ENCODE measurements at regions of chr1 and their contacts with region 1.

Region 1: DNA sequence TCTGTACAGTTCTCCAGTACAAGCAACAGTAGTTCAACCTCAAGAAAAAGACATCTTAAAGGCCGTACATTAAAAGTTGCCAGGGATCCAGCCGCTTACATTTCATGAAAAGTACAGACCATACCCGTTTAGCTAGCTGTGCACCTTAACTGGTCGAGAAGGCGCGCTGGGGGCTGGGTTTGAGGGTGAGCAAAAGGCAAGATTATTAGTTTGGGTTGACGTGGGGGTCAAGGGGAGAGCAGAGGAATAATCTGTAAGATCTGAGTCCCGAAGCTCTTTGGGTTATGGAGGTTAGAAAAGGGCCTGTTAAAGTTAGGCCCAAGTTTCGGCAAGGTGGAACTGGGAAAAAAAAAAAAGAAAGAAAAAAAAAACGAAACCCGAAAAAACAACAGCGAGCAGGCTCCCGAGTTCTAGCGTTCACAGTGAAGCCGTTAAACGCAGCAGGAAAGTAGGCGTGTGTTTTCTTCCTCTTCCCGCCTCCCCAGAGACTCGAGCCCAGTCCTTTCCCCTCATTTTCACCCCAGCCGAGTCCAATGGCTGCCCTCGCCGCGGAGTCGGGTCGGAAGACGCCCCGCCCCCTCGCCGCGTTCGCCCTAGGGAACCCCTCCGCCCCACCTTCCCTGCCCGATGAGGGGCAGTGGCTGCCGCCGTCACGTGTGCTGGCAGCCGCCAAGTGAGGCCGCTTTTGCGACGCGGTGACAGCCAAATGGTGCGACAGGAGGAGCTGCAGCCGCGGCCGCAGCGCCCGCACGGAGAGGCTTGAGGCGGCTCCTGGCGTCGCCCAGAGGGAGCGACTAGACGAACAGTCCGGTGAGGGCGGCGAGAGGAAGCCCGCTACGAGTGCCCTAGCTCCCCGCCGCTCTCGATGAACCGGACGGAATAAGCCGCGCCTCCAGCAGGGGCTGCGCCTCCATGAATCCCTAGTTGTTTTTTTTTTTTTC is at the start of gene PKN2:
- DNase-seq: peak; percentile 98
- H3K4me3 Mint-ChIP-seq: peak within 1 kb of the TSS; percentile 92
- H3K27ac Mint-ChIP-seq: peak within 1 kb of the TSS; percentile 95
- H3K4me1 Mint-ChIP-seq: peaks cover 22% of the 10 kb centered on the region
- H3K27me3 Mint-ChIP-seq: no peaks in the 10 kb centered on the region
- total RNA-seq, gene PKN2: 16.2 to 17.9 TPM

Region 2: DNA sequence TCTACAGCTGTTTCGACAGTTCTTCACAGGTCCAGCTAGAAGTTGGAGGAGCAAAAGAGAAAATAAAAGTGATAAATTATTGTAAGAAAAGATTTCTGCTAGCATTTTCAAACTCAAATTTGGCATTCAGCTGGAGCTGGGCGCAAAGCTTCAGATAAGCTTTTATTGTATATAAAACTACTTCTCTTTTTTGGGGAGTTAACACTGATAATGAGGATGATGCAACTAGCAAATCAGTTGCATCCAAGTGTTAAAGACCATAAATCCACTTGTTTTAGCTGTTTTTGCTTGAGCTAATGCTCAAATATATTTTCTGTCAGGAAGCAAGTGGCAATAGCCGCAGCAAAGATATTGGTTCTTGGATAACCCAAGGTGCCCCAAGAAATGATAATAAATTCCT is 126.8 kb before region 1 on chr1:
- CTCF ChIA-PET with region 1: no interaction called
- POLR2A ChIA-PET with region 1: no interaction called
- intact Hi-C with region 1: no loop called
- DNase-seq: no peak
- H3K4me3 Mint-ChIP-seq: no peak overlapping the region
- H3K27ac Mint-ChIP-seq: no peak overlapping the region
- H3K4me1 Mint-ChIP-seq: no peaks in the 10 kb centered on the region
- H3K27me3 Mint-ChIP-seq: peaks cover 2% of the 10 kb centered on the region

Region 3: GRCh38 chr1:88655685-88656299 is 28.0 kb before region 1 on chr1:
- CTCF ChIA-PET with region 1: interaction called, 23 read pairs
- POLR2A ChIA-PET with region 1: interaction called, 4 read pairs
- intact Hi-C with region 1: loop called (anchors 1 kb)
- DNase-seq: no peak
- H3K4me3 Mint-ChIP-seq: no peak overlapping the region
- H3K27ac Mint-ChIP-seq: no peak overlapping the region
- H3K4me1 Mint-ChIP-seq: peaks cover 14% of the 10 kb centered on the region
- H3K27me3 Mint-ChIP-seq: no peaks in the 10 kb centered on the region

Region 4: DNA sequence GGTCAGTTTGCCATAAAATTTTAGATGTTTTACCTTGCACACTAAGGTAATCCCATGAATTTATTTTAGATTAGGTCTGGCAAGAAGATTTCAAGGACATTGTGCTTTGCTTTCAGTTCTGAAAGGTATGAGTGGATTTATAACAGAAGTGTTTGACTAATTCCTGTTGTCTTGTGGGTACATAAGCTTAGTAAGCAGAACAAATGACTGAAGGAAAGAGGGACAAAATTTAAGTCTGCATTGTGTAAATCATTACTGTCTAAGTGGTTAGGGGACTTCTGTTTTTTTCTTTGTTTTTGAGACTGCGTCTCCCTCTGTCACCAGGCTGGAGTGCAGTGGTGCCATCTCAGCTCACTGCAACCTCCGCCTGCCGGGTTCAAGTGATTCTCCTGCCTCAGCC is 60.3 kb after region 1 on chr1:
- CTCF ChIA-PET with region 1: no interaction called
- POLR2A ChIA-PET with region 1: no interaction called
- intact Hi-C with region 1: loop called (anchors 2 kb)
- DNase-seq: no peak
- H3K4me3 Mint-ChIP-seq: no peak overlapping the region
- H3K27ac Mint-ChIP-seq: no peak overlapping the region
- H3K4me1 Mint-ChIP-seq: peaks cover 12% of the 10 kb centered on the region
- H3K27me3 Mint-ChIP-seq: no peaks in the 10 kb centered on the region

Region 5: GRCh38 chr1:88877382-88877825 is 193.6 kb after region 1 on chr1:
- CTCF ChIA-PET with region 1: interaction called, 10 read pairs
- POLR2A ChIA-PET with region 1: no interaction called
- intact Hi-C with region 1: no loop called
- DNase-seq: no peak
- H3K4me3 Mint-ChIP-seq: no peak overlapping the region
- H3K27ac Mint-ChIP-seq: peak overlapping the region; percentile 18
- H3K4me1 Mint-ChIP-seq: peaks cover 42% of the 10 kb centered on the region
- H3K27me3 Mint-ChIP-seq: no peaks in the 10 kb centered on the region

Region 6: GRCh38 chr1:88990426-88990825 is 306.6 kb after region 1 on chr1:
- CTCF ChIA-PET with region 1: no interaction called
- POLR2A ChIA-PET with region 1: no interaction called
- intact Hi-C with region 1: loop called (anchors 2 kb)
- DNase-seq: no peak
- H3K4me3 Mint-ChIP-seq: peak overlapping the region; percentile 35
- H3K27ac Mint-ChIP-seq: peak overlapping the region; percentile 70
- H3K4me1 Mint-ChIP-seq: peaks cover 47% of the 10 kb centered on the region
- H3K27me3 Mint-ChIP-seq: no peaks in the 10 kb centered on the region